ENCODE measurements at regions of chr1 and their contacts with region 1.

Region 1: GRCh38 chr1:148334339-148335130 is 148.6 kb downstream of the PPIAL4G start:
- DNase-seq: peak; percentile 48 to 83 (median 70)
- ATAC-seq: peak; percentile 77 to 80
- H3K4me3 Mint-ChIP-seq: peak overlapping the region; percentile 92 to 100 (median 98)
- H3K27ac Mint-ChIP-seq: peak overlapping the region; percentile 95 to 100 (median 99)
- H3K4me1 Mint-ChIP-seq: peaks cover 29 to 40% (median 34%) of the 10 kb centered on the region in 4 donors
- H3K27me3 Mint-ChIP-seq: peaks cover 0 to 8% (median 4%) of the 10 kb centered on the region in 5 donors

Region 2: DNA sequence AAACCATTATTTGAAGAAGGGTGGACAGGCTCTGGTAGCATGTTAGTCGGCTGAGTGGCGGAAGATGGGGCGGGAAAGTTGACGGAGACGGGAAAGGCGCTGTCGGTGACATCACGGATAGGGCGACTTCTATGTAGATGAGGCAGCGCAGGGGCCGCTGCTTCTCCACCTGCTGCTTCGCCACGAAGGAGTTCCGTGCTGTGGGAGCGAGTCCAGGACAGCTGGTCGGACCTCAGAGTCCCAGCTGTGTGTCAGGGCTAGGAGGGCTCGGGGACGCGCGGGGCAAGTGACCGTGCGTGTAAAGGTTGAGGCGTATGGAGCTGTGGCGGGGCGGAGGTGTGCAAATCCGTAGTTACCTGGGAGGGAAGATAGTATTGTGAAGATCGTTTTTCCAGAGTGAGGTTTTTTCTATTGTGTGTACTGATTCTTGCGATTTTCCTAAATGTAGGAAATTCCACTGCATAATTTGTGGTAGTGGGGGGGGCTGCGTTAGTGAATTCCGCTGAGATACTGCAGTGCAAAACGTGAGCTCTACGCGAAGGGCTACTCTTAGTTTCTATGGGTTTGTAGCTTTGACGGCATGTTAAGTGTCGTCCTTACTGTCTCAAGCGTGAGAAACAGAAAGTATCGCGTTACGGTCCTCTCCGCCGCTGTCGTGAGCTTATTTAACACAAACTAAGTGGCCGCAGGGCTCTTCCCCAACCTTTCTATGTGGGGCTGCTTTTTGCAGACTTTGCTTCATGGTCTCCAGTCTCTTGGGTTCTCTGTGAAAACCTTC is 71.2 kb before region 1 on chr1:
- POLR2A ChIA-PET with region 1: interaction called, 13 read pairs
- DNase-seq: peak; percentile 11 to 73 (median 51)
- ATAC-seq: peak; percentile 88
- H3K4me3 Mint-ChIP-seq: peak overlapping the region; percentile 85 to 97 (median 95)
- H3K27ac Mint-ChIP-seq: peak overlapping the region; percentile 91 to 99 (median 97)
- H3K4me1 Mint-ChIP-seq: peaks cover 13 to 18% (median 15%) of the 10 kb centered on the region in 4 donors
- H3K27me3 Mint-ChIP-seq: peaks cover 0 to 2% (median 0%) of the 10 kb centered on the region in 5 donors

Region 3: DNA sequence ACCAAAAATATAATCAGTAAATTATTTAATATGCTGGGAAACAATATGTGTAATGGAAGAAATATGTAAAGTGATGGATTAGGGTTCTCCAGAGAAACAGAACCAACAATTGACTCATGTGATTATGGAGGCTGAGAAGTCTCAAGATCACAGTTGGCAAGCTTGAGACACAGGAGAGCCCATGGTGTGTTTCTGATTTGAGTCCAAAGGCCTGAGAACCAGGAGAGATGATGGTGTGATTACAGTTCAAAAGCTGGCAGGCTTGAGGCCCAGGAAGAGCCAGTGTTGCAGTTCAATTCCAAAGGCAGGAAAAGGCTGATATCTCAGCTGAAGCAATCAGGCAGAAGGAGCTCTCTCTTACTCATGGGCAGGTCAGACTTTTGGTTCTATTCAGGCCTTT is 43.7 kb before region 1 on chr1:
- POLR2A ChIA-PET with region 1: no interaction called
- DNase-seq: no peak
- ATAC-seq: no peak
- H3K4me3 Mint-ChIP-seq: no peak overlapping the region
- H3K27ac Mint-ChIP-seq: peak overlapping the region in 1 of 10 donors; percentile 41
- H3K4me1 Mint-ChIP-seq: peaks cover 0 to 5% (median 0%) of the 10 kb centered on the region in 4 donors
- H3K27me3 Mint-ChIP-seq: peaks cover 0 to 24% (median 0%) of the 10 kb centered on the region in 5 donors

Region 4: DNA sequence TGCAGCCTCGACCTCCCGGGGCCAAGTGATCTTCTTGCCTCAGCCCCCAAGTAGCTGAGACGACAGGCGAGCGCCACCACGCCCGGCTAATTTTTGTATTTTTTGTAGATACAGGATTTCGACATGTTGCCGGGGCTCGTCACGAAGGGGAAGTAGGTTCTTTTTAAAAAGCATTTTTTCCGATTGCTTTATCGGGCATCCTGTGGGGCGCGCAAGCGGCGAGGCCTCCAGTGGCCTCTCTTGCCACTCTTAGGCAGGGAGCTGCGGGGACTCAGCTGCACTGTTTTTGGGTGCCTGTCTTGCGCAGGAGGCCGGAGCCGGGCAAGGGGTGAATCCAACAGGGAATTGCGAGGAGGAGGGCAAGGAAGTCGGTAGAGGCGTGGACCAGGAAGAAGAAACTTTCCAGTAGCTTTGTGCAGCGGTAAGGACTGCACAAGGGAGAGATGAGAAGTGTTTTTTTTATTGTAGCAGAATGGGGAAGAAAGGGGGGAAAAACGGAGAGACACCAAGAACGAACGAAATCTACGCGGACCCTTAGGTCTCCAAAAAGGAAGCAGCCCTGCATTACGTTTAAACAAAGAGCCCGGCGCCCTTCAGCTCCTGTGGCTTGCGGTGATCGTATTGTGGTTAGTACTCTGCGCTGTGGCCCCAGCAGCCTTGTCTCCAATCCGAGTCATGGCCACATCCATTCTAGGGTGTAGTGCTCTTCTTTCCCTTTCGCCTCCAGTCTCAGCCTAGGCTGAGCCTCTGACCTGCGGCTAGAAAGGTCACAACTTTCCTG is 16.2 kb before region 1 on chr1:
- POLR2A ChIA-PET with region 1: interaction called, 12 read pairs
- DNase-seq: peak in 9 of 10 donors; percentile 31 to 78 (median 56)
- ATAC-seq: peak; percentile 91 to 93
- H3K4me3 Mint-ChIP-seq: peak overlapping the region; percentile 87 to 98 (median 94)
- H3K27ac Mint-ChIP-seq: peak overlapping the region; percentile 27 to 92 (median 74)
- H3K4me1 Mint-ChIP-seq: peaks cover 10 to 45% (median 28%) of the 10 kb centered on the region in 4 donors
- H3K27me3 Mint-ChIP-seq: peaks cover 0 to 6% (median 3%) of the 10 kb centered on the region in 5 donors

Measured in naive thymus-derived CD8-positive, alpha-beta T cell (primary cell).